ENCODE measurements at regions of chr10 and their contacts with region 1.

Region 1: GRCh38 chr10:100730725-100731406 is 14.5 kb upstream of the PAX2 start:
- DNase-seq: no peak
- H3K4me3 ChIP-seq: no peak overlapping the region
- H3K27ac ChIP-seq: no peak overlapping the region
- H3K4me1 ChIP-seq: no peaks in the 10 kb centered on the region
- H3K27me3 ChIP-seq: no peaks in the 10 kb centered on the region
- CTCF ChIP-seq: no peak
- EP300 ChIP-seq: no peak
- POLR2A ChIP-seq: no peak

Region 2: DNA sequence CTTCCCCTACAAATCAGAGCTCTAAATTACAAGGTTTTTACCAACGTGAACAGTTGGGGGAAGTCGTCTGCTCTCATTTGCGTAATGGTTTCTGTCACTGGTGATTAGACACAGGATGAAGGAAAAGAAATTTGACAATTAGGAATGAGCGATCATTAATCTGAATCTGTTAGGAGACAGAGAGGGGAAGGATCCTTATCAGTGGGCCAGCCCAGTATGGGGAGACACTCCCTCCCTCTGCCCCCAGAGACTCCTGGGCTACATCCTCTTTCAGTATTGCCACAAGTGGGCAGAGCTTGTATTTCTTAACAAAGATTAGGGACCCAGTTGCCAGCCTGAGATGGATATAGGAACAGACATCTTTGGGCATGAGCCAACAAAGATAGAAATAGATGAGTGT is 179.7 kb before region 1 on chr10:
- intact Hi-C with region 1: no loop called
- DNase-seq: no peak
- H3K4me3 ChIP-seq: no peak overlapping the region
- H3K27ac ChIP-seq: no peak overlapping the region
- H3K4me1 ChIP-seq: no peaks in the 10 kb centered on the region
- H3K27me3 ChIP-seq: no peaks in the 10 kb centered on the region
- CTCF ChIP-seq: no peak
- EP300 ChIP-seq: no peak
- POLR2A ChIP-seq: no peak

Region 3: GRCh38 chr10:100642295-100642994 is 88.4 kb before region 1 on chr10:
- intact Hi-C with region 1: loop called in 1 of 4 experiments (anchors 2 kb)
- DNase-seq: no peak
- H3K4me3 ChIP-seq: no peak overlapping the region
- H3K27ac ChIP-seq: no peak overlapping the region
- H3K4me1 ChIP-seq: no peaks in the 10 kb centered on the region
- H3K27me3 ChIP-seq: no peaks in the 10 kb centered on the region
- CTCF ChIP-seq: no peak
- EP300 ChIP-seq: no peak
- POLR2A ChIP-seq: no peak

Measured in ovary (tissue), 10 donors.